ENCODE measurements at regions of chr9 and their contacts with region 1.

Region 1: DNA sequence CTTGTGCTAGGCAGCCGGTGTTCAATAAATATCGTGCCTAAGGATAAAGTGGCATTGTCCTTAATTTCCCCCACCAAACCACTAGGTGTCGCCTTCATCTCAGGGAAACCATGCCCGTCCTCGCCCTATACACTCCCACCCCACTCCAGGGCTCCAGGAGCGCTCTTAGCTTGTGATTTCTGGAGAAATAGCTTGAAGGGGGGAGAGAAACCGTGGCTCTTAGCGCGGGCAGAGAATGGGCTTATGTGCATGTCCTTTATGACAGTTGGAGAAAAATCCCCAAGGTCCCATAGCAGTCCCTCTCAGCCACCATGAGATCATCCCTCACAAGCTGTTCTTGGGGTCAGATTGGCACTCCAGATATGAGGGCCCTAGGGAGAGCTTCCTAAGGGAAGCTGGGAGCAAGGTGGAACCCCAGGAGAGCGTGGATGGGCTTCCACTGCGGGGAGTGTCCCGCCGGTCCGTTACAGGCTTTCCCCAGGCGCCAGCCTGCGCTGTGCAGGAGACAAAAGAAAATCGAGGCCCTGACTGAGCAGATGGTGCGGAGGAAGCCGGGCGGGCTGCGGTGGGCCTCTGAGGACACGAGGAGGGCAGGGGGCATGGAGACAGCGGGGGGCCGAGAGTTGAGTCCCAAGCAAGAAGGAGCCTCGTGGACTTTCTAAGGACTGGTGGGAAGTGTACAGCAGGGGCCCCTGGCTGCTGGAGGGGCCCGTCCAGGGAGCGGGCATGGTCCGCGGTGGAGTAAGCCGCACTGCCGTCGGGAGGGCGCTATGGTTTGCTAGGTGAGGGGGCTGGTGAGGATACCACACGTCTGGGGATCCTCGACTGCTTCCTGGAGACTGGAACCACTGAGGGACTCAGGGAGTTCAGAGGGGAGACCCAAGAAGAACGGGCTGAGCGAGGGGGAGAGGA is 750 bp upstream of the NPR2 start:
- DNase-seq: peak; percentile 92
- H3K4me3 ChIP-seq: no peak overlapping the region
- H3K27ac ChIP-seq: no peak overlapping the region
- H3K4me1 ChIP-seq: peaks cover 0 to 12% of the 10 kb centered on the region in 2 experiments; a peak in 1 of 4 replicates
- H3K27me3 ChIP-seq: no peaks in the 10 kb centered on the region
- CTCF ChIP-seq: peak; percentile 86
- EP300 ChIP-seq: no peak
- RAD21 ChIP-seq: peak; percentile 95

Region 2: GRCh38 chr9:35748858-35749514 is 41.7 kb before region 1 on chr9 and contains the starts of genes GBA2 and RGP1:
- CTCF ChIA-PET with region 1: interaction called, 18 read pairs
- POLR2A ChIA-PET with region 1: no interaction called
- DNase-seq: peak; percentile 94
- H3K4me3 ChIP-seq: peak within 1 kb of the TSS; percentile 97 to 98
- H3K27ac ChIP-seq: peak within 1 kb of the TSS; percentile 70 to 79; a peak in 3 of 4 replicates
- H3K4me1 ChIP-seq: peaks cover 12 to 33% of the 10 kb centered on the region in 2 experiments; a peak in 2 of 4 replicates
- H3K27me3 ChIP-seq: no peaks in the 10 kb centered on the region
- CTCF ChIP-seq: no peak
- EP300 ChIP-seq: peak in 1 of 2 experiments; percentile 54; a peak in 1 of 4 replicates
- RAD21 ChIP-seq: no peak
- polyA plus RNA-seq, gene GBA2: 71.5 and 98.2 TPM in 2 replicates
- polyA plus RNA-seq, gene RGP1: 16.1 and 18.6 TPM in 2 replicates

Region 3: DNA sequence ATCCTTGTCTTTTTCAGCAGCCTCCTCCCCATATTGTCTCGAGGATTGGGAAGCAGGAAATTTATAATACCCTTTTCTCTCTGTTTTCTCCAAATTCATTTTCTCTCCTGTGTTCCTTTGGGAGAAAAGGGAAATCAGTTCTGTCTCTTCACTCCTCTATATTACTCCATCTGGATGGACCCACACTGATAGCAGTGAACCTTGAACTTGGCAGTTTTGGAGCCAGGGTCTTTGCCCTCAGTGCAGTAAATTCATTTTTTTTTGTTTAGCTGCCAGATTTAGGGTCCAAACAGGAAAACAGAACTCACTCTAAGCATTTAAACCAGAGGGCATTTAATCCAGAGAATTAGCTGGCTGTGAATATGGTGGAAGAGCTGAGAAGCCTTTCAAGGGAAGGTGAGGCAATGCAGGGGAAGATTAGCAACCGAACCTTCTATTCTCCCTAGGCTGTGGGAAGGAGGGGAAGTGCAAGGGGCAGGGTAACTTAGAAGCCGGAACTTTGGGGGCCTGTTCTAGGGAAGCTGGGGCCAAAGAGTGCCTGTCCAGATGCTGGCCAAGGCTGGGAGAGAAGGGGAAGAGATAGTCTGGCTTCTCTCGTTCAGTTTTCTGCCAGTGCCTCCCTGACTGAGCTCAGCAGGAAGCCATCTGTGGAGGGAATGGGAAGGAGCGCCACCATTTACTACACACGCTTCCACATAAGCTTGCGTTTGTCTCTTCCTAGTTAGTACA is 15.6 kb before region 1 on chr9:
- CTCF ChIA-PET with region 1: interaction called, 26 read pairs
- POLR2A ChIA-PET with region 1: no interaction called
- DNase-seq: no peak
- H3K4me3 ChIP-seq: no peak overlapping the region
- H3K27ac ChIP-seq: no peak overlapping the region
- H3K4me1 ChIP-seq: peaks cover 5 to 6% of the 10 kb centered on the region in 2 experiments; a peak in 3 of 4 replicates
- H3K27me3 ChIP-seq: no peaks in the 10 kb centered on the region
- CTCF ChIP-seq: no peak
- EP300 ChIP-seq: no peak
- RAD21 ChIP-seq: no peak

Region 4: GRCh38 chr9:35814841-35815543 is 24.4 kb after region 1 on chr9 and contains the start of gene HINT2:
- CTCF ChIA-PET with region 1: interaction called, 44 read pairs
- POLR2A ChIA-PET with region 1: interaction called, 5 read pairs
- DNase-seq: peak; percentile 95
- H3K4me3 ChIP-seq: peak within 1 kb of the TSS; percentile 81 to 92
- H3K27ac ChIP-seq: peak within 1 kb of the TSS; percentile 77 to 96
- H3K4me1 ChIP-seq: peaks cover 7 to 30% of the 10 kb centered on the region in 2 experiments; a peak in 3 of 4 replicates
- H3K27me3 ChIP-seq: no peaks in the 10 kb centered on the region
- CTCF ChIP-seq: no peak
- EP300 ChIP-seq: no peak
- RAD21 ChIP-seq: no peak
- polyA plus RNA-seq, gene HINT2: 39.9 and 57.2 TPM in 2 replicates

Region 5: DNA sequence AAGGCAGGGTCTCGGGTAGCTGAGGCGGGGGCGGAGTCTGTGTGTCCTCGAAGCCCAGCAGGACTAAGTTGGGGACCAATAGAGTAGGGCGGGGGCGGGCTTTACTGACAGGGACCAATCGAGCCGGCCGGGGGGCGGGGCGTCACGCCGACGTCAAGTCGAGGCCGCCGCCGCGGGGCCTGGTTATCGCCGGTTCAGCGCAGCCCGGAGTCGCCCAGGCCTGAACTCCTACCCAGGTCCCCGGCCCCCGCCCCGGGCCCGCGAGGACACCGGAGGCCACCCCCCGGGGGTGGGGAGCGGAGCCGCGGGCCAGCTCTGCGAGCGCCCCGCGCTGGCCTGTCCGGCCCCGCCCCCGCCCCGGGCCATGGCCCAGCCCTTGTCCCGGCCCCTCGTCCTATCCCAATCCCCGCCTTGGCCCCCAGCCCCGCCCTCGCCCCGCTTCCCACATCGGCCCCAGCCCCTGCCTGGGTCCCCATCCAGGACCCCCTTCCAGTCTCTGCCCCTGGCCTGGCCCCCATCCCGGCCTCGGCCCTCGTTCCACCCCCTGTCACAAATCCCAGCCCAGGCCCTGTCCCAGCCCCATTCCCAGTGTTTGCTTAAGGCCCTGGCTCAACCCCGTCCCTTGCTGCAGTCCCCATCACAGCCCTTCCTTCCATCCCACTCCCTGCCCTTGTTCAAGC is 38.6 kb after region 1 on chr9 and contains the start of gene TMEM8B:
- CTCF ChIA-PET with region 1: interaction called, 54 read pairs
- POLR2A ChIA-PET with region 1: no interaction called
- DNase-seq: peak; percentile 97
- H3K4me3 ChIP-seq: peak within 1 kb of the TSS; percentile 56 to 80
- H3K27ac ChIP-seq: peak within 1 kb of the TSS; percentile 46 to 56; a peak in 3 of 4 replicates
- H3K4me1 ChIP-seq: peaks cover 7 to 25% of the 10 kb centered on the region in 2 experiments; a peak in 1 of 4 replicates
- H3K27me3 ChIP-seq: no peaks in the 10 kb centered on the region
- CTCF ChIP-seq: no peak
- EP300 ChIP-seq: no peak
- RAD21 ChIP-seq: no peak
- polyA plus RNA-seq, gene TMEM8B: 5.3 and 5.8 TPM in 2 replicates

Region 6: GRCh38 chr9:35859310-35859989 is 68.8 kb after region 1 on chr9:
- CTCF ChIA-PET with region 1: interaction called, 25 read pairs
- POLR2A ChIA-PET with region 1: interaction called, 3 read pairs
- DNase-seq: peak; percentile 51
- H3K4me3 ChIP-seq: no peak overlapping the region
- H3K27ac ChIP-seq: no peak overlapping the region
- H3K4me1 ChIP-seq: peaks cover 0 to 9% of the 10 kb centered on the region in 2 experiments; a peak in 1 of 4 replicates
- H3K27me3 ChIP-seq: no peaks in the 10 kb centered on the region; the same call in 1 of the 2 replicates
- CTCF ChIP-seq: no peak
- EP300 ChIP-seq: no peak
- RAD21 ChIP-seq: no peak

Region 7: GRCh38 chr9:36676778-36677485 is 886.3 kb after region 1 on chr9:
- CTCF ChIA-PET with region 1: no interaction called
- POLR2A ChIA-PET with region 1: no interaction called
- DNase-seq: peak; percentile 10
- H3K4me3 ChIP-seq: no peak overlapping the region
- H3K27ac ChIP-seq: no peak overlapping the region
- H3K4me1 ChIP-seq: peaks cover 0 to 8% of the 10 kb centered on the region in 2 experiments; a peak in 2 of 4 replicates
- H3K27me3 ChIP-seq: no peaks in the 10 kb centered on the region
- CTCF ChIP-seq: no peak
- EP300 ChIP-seq: no peak
- RAD21 ChIP-seq: no peak